Activated CD4-positive, alpha-beta T cell treated with anti-CD3 and anti-CD28 coated beads for 36 hours (primary cell): ENCODE measurements at regions of chr2 and their contacts with region 1.

Region 1: GRCh38 chr2:138502284-138503086 is 915 bp downstream of the SPOPL start:
- DNase-seq: no peak
- ATAC-seq: no peak
- H3K4me3 Mint-ChIP-seq: peak overlapping the region; percentile 97
- H3K27ac Mint-ChIP-seq: peak overlapping the region; percentile 96
- H3K4me1 Mint-ChIP-seq: peaks cover 40% of the 10 kb centered on the region
- H3K27me3 Mint-ChIP-seq: no peaks in the 10 kb centered on the region

Region 2: DNA sequence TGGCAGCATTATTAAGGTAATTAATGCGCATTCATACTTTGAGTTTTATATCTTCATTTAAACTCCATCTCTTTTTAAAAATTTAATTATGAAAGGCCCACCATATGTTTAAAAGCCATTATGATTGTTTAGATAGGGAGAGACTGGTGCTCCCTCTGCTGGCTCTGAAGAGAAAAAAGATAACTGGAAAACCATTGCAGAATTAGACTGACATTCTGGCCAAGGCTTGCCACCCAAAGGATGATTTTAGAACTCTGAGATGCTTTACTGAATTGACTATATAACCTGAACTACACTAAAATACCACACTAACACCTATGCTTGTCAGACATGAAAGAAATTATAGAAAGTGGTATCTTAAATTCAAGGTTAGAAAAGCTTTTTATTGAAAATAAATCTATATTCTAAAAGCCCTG is 128.5 kb before region 1 on chr2:
- CTCF ChIA-PET with region 1: no interaction called
- POLR2A ChIA-PET with region 1: no interaction called
- intact Hi-C with region 1: no loop called
- DNase-seq: peak; percentile 12
- ATAC-seq: no peak
- H3K4me3 Mint-ChIP-seq: no peak overlapping the region
- H3K27ac Mint-ChIP-seq: no peak overlapping the region
- H3K4me1 Mint-ChIP-seq: no peaks in the 10 kb centered on the region
- H3K27me3 Mint-ChIP-seq: no peaks in the 10 kb centered on the region

Region 3: DNA sequence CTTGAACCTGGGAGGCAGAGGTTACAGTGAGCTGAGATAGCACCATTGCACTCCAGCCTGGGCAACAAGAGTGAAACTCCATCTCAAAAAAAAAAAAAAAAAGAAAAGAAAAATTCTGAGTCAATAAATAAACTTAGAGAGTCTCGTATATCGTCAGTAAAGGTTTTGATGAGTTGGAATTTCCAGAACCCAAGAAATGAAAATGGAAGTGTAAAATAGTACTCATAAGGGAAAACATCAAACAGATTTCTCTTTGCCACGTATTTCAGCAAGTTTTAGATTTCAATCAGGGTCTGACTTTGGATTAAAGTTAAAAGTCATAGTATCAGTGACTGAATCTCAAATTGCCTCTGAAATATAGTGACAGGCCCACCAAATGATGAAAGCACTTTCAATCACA is 72.3 kb before region 1 on chr2:
- CTCF ChIA-PET with region 1: no interaction called
- POLR2A ChIA-PET with region 1: no interaction called
- intact Hi-C with region 1: loop called in 1 of 2 experiments (anchors 1 kb)
- DNase-seq: no peak
- ATAC-seq: peak; percentile 80
- H3K4me3 Mint-ChIP-seq: no peak overlapping the region
- H3K27ac Mint-ChIP-seq: no peak overlapping the region
- H3K4me1 Mint-ChIP-seq: peaks cover 7% of the 10 kb centered on the region
- H3K27me3 Mint-ChIP-seq: no peaks in the 10 kb centered on the region

Region 4: GRCh38 chr2:138548796-138549195 is 46.3 kb after region 1 on chr2:
- CTCF ChIA-PET with region 1: no interaction called
- POLR2A ChIA-PET with region 1: no interaction called
- intact Hi-C with region 1: loop called in 1 of 2 experiments (anchors 1 kb)
- DNase-seq: no peak
- ATAC-seq: no peak
- H3K4me3 Mint-ChIP-seq: no peak overlapping the region
- H3K27ac Mint-ChIP-seq: no peak overlapping the region
- H3K4me1 Mint-ChIP-seq: peaks cover 13% of the 10 kb centered on the region
- H3K27me3 Mint-ChIP-seq: no peaks in the 10 kb centered on the region